B cell (primary cell): ENCODE measurements at regions of chr13 and their contacts with region 1.

Region 1: GRCh38 chr13:32857689-32858088 is 158.5 kb upstream of the KL start:
- DNase-seq: no peak
- ATAC-seq: no peak
- H3K4me3 ChIP-seq: no peak overlapping the region
- H3K4me3 Mint-ChIP-seq: no peak overlapping the region
- H3K27ac ChIP-seq: no peak overlapping the region
- H3K27ac Mint-ChIP-seq: no peak overlapping the region
- H3K4me1 ChIP-seq: no peaks in the 10 kb centered on the region
- H3K4me1 Mint-ChIP-seq: no peaks in the 10 kb centered on the region
- H3K27me3 ChIP-seq: peaks cover 0 to 7% (median 0%) of the 10 kb centered on the region in 4 experiments
- H3K27me3 Mint-ChIP-seq: peaks cover 5% of the 10 kb centered on the region
- CTCF ChIP-seq: no peak

Region 2: DNA sequence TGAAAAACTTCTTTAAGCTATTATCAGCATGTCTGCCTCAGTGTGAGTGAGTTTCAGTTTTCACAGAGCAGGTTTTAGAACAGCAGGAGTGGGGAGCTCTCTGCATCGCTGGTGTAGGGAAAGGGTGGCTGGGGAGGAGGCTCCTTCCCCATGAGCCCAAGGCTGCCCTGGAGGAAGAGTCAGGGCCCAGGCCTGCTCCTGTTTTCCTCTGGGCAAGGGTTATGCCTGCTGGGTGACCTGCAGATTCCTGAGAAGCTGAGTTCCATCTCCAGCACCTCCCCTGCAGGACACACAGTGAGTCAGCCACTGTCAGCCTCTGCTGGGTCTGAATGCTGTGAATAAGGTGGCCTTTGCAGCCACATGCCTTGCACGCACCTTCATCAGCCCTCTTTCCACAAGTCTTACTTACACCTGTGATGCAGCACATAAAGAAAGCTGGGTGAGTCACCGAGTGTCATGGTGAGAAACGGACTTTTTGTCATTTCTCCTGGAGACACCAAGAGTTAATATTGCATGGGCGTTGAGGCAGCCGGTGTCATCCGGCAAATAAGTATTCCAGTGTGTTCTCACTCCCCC is 27.9 kb before region 1 on chr13:
- CTCF ChIA-PET with region 1: no interaction called
- POLR2A ChIA-PET with region 1: no interaction called
- intact Hi-C with region 1: loop called (anchors 1 kb)
- DNase-seq: no peak
- ATAC-seq: no peak
- H3K4me3 ChIP-seq: no peak overlapping the region
- H3K4me3 Mint-ChIP-seq: no peak overlapping the region
- H3K27ac ChIP-seq: no peak overlapping the region
- H3K27ac Mint-ChIP-seq: no peak overlapping the region
- H3K4me1 ChIP-seq: no peaks in the 10 kb centered on the region
- H3K4me1 Mint-ChIP-seq: no peaks in the 10 kb centered on the region
- H3K27me3 ChIP-seq: peaks cover 0 to 4% (median 0%) of the 10 kb centered on the region in 4 experiments
- H3K27me3 Mint-ChIP-seq: peaks cover 3% of the 10 kb centered on the region
- CTCF ChIP-seq: no peak

Region 3: DNA sequence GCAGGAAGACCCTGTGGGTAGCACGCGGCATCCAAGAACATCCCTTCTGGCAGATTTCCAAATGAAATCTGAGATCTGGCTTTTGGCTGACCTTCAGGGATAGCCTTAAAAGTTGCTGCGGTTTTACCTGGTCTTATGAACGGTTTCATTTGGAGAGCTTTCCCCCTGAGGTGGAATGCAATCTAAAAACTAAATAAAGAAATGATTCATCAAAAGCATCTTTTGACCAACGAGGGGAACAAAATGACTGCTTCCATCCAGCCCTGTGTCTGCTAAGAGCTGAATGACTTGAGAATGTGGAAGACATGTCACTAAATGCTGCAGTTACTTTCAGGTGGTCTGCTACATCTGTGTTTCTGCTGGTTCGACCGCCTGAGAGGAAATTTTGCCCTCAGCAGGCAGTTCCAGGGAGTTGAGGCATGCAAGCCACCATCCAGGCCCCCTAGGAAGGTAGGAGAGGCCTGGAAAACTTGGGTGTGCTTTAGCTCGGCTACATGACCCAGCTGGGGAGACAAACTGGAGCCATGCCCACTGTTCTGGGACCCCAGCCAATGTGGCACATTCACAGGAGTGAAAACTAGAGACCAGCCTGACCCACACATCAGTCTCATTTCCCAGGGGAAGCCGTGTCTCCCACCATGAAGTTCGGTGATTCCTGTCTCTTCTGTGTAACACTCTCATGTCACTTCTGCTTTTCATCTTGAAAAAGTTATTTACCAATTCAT is 16.5 kb before region 1 on chr13:
- CTCF ChIA-PET with region 1: no interaction called
- POLR2A ChIA-PET with region 1: no interaction called
- intact Hi-C with region 1: no loop called
- DNase-seq: no peak
- ATAC-seq: no peak
- H3K4me3 ChIP-seq: no peak overlapping the region
- H3K4me3 Mint-ChIP-seq: no peak overlapping the region
- H3K27ac ChIP-seq: no peak overlapping the region
- H3K27ac Mint-ChIP-seq: no peak overlapping the region
- H3K4me1 ChIP-seq: peaks cover 18 to 37% of the 10 kb centered on the region in 2 donors
- H3K4me1 Mint-ChIP-seq: peaks cover 29% of the 10 kb centered on the region
- H3K27me3 ChIP-seq: no peaks in the 10 kb centered on the region
- H3K27me3 Mint-ChIP-seq: peaks cover 3% of the 10 kb centered on the region
- CTCF ChIP-seq: no peak

Region 4: DNA sequence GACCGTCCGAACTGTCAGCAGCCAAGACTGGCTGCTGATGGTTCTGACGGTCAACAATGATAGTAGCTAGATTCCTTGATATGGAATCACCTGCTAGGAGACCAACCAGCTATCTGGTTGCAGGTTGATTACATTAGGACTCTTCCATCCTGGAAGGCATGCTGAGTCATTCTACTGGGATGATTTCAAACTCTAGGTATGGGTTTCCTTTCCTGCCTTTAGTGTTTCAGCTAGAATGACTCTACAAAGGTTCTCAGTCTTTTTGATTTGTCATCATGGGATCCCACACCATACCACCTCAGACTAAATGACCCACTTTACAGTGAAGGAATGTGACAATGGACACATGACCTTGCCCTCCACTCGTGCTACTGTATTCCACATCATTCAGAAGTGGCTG is 20.5 kb after region 1 on chr13:
- CTCF ChIA-PET with region 1: no interaction called
- POLR2A ChIA-PET with region 1: no interaction called
- intact Hi-C with region 1: no loop called
- DNase-seq: no peak
- ATAC-seq: no peak
- H3K4me3 ChIP-seq: no peak overlapping the region
- H3K4me3 Mint-ChIP-seq: no peak overlapping the region
- H3K27ac ChIP-seq: no peak overlapping the region
- H3K27ac Mint-ChIP-seq: no peak overlapping the region
- H3K4me1 ChIP-seq: no peaks in the 10 kb centered on the region
- H3K4me1 Mint-ChIP-seq: no peaks in the 10 kb centered on the region
- H3K27me3 ChIP-seq: no peaks in the 10 kb centered on the region
- H3K27me3 Mint-ChIP-seq: no peaks in the 10 kb centered on the region
- CTCF ChIP-seq: no peak

Region 5: DNA sequence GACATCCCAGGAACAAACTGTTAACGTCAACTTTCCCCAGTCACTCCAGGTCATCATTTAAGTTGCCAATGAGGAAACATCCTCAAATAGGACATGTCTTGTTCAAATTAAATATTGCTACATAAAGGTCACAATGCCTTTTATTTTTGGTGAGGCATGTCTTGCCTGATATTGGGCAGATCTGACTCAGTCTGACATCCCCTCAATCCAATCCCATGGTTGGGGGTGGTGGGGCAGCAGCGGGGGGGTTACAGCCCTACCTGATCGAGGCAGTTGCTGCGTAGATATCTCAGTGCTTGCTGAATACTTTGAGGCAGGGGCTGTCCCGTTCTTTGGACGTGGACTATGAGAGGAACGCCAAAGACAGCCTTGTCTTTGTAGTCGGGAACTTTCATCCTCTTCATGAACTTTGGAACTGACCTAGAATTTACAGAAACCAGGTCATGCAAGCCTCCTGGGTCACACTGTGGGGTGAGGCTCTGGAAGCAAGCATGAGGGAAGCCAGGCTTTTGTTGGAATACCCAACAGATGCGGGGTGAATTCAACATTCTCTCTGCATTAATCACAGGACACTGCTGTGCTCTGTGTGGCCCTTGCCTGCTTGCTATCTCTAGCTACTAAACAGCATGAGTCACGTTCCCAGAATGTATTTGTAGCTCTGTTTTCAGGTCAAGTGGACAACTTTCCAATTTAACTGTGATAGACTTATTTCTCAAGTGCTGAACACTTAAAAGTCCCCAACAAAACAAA is 268.3 kb after region 1 on chr13:
- CTCF ChIA-PET with region 1: no interaction called
- POLR2A ChIA-PET with region 1: no interaction called
- intact Hi-C with region 1: no loop called
- DNase-seq: no peak
- ATAC-seq: no peak
- H3K4me3 ChIP-seq: no peak overlapping the region
- H3K4me3 Mint-ChIP-seq: no peak overlapping the region
- H3K27ac ChIP-seq: no peak overlapping the region
- H3K27ac Mint-ChIP-seq: no peak overlapping the region
- H3K4me1 ChIP-seq: no peaks in the 10 kb centered on the region
- H3K4me1 Mint-ChIP-seq: no peaks in the 10 kb centered on the region
- H3K27me3 ChIP-seq: no peaks in the 10 kb centered on the region
- H3K27me3 Mint-ChIP-seq: no peaks in the 10 kb centered on the region
- CTCF ChIP-seq: no peak